ENCODE measurements at regions of chr3 and their contacts with region 1.

Region 1: DNA sequence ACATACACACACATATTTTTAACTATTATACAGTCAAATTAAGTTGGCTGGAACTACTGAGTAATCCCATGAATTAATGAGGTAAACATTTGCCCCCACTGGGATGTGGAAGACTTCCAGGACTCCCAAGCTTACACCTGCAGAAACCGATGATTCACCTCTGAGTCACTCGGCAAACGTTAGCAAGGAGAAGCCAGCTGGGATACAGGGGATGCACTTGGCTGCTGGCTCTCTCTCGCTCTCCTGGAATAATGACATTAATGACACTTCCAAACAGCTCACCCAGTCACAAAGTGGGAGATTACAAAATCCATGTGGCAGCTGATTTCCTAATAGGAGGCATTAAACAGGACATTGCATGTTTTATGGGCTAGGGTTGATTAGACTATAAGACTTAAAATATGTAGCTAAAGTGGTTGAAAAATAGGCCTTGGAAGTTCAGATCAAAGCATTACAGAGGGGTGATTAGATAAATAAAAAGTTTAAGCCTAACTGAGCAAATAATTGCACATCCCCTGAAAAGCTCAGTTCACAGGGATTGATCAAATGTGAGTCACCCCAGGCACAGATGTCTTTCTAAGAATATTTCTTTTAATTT is 500.9 kb downstream of the SOX2 start:
- DNase-seq: peak; percentile 89 to 93
- H3K4me3 ChIP-seq: no peak overlapping the region
- H3K4me3 Mint-ChIP-seq: no peak overlapping the region
- H3K27ac Mint-ChIP-seq: peak overlapping the region; percentile 75
- H3K4me1 ChIP-seq: peaks cover 43% of the 10 kb centered on the region
- H3K4me1 Mint-ChIP-seq: peaks cover 37% of the 10 kb centered on the region
- H3K27me3 ChIP-seq: no peaks in the 10 kb centered on the region
- H3K27me3 Mint-ChIP-seq: no peaks in the 10 kb centered on the region
- CTCF ChIP-seq: no peak

Region 2: DNA sequence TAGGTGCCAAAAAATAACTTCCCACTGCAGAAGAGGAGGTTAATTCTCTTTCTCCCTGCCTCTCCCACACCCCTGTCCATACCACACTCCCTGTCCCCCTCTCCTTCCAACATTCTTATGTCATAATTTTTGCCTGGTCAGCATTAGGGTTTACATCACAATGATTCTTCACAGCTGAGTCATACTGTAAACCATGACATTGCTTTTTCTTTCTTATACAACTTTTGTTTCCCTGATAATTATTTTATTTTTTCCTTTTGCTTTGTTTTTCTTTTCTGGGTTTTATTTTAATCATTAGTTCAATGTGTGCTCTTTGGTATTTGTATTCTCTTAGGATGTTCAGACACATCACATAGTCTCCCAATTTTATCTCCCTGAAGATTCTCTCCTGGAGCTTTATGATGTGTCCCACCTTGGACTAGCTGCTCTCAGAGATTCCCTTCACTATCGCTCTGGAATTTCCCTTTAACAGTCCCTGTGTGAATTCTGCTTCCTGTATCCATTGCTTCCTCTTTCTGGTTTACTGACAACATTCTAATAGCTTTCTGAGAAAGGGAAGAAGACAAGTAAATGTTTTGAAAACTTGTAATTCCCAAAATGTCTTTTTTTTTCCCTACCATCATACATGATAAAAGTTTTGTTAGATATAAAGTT is 430.1 kb before region 1 on chr3:
- CTCF ChIA-PET with region 1: no interaction called
- POLR2A ChIA-PET with region 1: no interaction called
- intact Hi-C with region 1: loop called (anchors 1 kb)
- DNase-seq: no peak
- H3K4me3 ChIP-seq: no peak overlapping the region
- H3K4me3 Mint-ChIP-seq: no peak overlapping the region
- H3K27ac Mint-ChIP-seq: no peak overlapping the region
- H3K4me1 ChIP-seq: peaks cover 9% of the 10 kb centered on the region; the same call in 1 of the 2 replicates
- H3K4me1 Mint-ChIP-seq: peaks cover 9% of the 10 kb centered on the region
- H3K27me3 ChIP-seq: no peaks in the 10 kb centered on the region
- H3K27me3 Mint-ChIP-seq: no peaks in the 10 kb centered on the region
- CTCF ChIP-seq: no peak

Region 3: GRCh38 chr3:181969925-181970324 is 242.7 kb before region 1 on chr3:
- CTCF ChIA-PET with region 1: no interaction called
- POLR2A ChIA-PET with region 1: no interaction called
- intact Hi-C with region 1: no loop called
- DNase-seq: no peak
- H3K4me3 ChIP-seq: no peak overlapping the region
- H3K4me3 Mint-ChIP-seq: no peak overlapping the region
- H3K27ac Mint-ChIP-seq: no peak overlapping the region
- H3K4me1 ChIP-seq: no peaks in the 10 kb centered on the region
- H3K4me1 Mint-ChIP-seq: no peaks in the 10 kb centered on the region
- H3K27me3 ChIP-seq: no peaks in the 10 kb centered on the region
- H3K27me3 Mint-ChIP-seq: no peaks in the 10 kb centered on the region
- CTCF ChIP-seq: no peak

Region 4: GRCh38 chr3:182105875-182106274 is 106.7 kb before region 1 on chr3:
- CTCF ChIA-PET with region 1: no interaction called
- POLR2A ChIA-PET with region 1: no interaction called
- intact Hi-C with region 1: no loop called
- DNase-seq: no peak
- H3K4me3 ChIP-seq: no peak overlapping the region
- H3K4me3 Mint-ChIP-seq: no peak overlapping the region
- H3K27ac Mint-ChIP-seq: no peak overlapping the region
- H3K4me1 ChIP-seq: no peaks in the 10 kb centered on the region
- H3K4me1 Mint-ChIP-seq: peaks cover 7% of the 10 kb centered on the region
- H3K27me3 ChIP-seq: no peaks in the 10 kb centered on the region
- H3K27me3 Mint-ChIP-seq: no peaks in the 10 kb centered on the region
- CTCF ChIP-seq: no peak

Region 5: DNA sequence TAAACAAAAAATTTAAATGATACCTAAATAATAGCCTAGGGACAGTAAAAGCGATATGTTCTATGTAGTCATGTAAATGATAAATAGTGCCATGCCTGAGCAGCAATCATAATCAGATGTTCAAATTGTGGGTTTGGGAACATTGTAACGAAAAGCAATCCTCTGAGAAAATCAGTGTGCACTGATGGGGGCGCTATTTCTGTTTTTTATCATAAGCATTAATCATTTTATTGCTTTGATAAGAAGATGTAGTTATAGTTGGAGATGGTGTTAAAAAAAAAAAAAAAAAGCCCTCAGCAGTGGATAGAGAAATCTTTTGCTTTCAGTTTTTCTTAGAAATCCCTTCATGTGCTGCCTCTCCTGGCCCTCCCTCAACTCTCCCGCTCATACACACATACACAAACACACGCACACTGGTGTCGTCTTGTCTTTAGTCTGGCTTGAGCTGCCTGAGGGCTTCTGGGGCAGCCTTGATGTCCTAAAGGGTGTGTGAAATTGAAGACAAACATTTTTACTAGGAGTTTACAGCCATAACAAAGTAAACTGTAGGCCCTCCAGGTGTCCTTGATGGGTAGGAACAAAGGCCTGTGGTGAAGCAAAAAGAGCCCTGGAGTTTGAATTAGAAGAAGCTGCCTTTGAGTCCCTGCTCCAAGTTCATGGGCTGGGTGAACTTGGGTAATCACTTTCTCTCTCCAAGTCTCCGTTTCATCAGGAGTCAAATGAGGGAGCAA is 72.8 kb before region 1 on chr3:
- CTCF ChIA-PET with region 1: interaction called, 4 read pairs
- POLR2A ChIA-PET with region 1: no interaction called
- intact Hi-C with region 1: loop called (anchors 2 kb)
- DNase-seq: peak; percentile 39 to 50
- H3K4me3 ChIP-seq: no peak overlapping the region
- H3K4me3 Mint-ChIP-seq: no peak overlapping the region
- H3K27ac Mint-ChIP-seq: no peak overlapping the region
- H3K4me1 ChIP-seq: peaks cover 8% of the 10 kb centered on the region; the same call in 1 of the 2 replicates
- H3K4me1 Mint-ChIP-seq: peaks cover 18% of the 10 kb centered on the region
- H3K27me3 ChIP-seq: no peaks in the 10 kb centered on the region
- H3K27me3 Mint-ChIP-seq: no peaks in the 10 kb centered on the region
- CTCF ChIP-seq: no peak

Region 6: DNA sequence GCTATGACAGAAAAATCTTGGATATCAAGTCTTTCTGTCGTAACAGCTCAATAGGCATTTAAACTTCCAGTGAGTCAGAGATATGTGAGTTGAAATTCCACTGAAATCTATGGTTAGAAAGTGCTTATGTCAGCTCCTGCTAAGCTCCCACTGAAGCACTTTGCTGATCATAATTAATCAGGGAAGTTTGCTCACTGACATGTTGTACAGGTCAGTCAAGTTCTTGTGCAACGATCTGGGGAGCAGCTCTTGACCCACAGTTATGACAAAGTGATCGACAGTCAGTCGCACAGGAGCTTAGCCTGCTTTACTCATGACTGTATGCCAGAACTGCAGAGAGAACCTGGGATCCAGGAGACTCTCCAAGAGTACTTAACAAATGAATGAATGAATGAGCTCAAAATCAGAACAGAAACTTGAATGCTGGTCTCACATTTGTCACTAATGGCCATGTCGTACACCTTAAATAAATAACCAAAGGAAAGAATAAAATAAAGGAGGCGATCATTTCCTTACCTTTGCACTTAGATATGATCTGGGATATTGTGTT is 47.3 kb before region 1 on chr3:
- CTCF ChIA-PET with region 1: interaction called, 3 read pairs
- POLR2A ChIA-PET with region 1: interaction called, 4 read pairs
- intact Hi-C with region 1: loop called (anchors 1 kb)
- DNase-seq: peak; percentile 73 to 83
- H3K4me3 ChIP-seq: no peak overlapping the region
- H3K4me3 Mint-ChIP-seq: peak overlapping the region; percentile 36
- H3K27ac Mint-ChIP-seq: peak overlapping the region; percentile 84
- H3K4me1 ChIP-seq: peaks cover 13% of the 10 kb centered on the region
- H3K4me1 Mint-ChIP-seq: peaks cover 14% of the 10 kb centered on the region
- H3K27me3 ChIP-seq: no peaks in the 10 kb centered on the region
- H3K27me3 Mint-ChIP-seq: no peaks in the 10 kb centered on the region
- CTCF ChIP-seq: no peak

Region 7: GRCh38 chr3:182258538-182259177 is 46.1 kb after region 1 on chr3:
- CTCF ChIA-PET with region 1: no interaction called
- POLR2A ChIA-PET with region 1: no interaction called
- intact Hi-C with region 1: loop called (anchors 1 kb)
- DNase-seq: peak in 1 of 2 experiments; percentile 58
- H3K4me3 ChIP-seq: no peak overlapping the region
- H3K4me3 Mint-ChIP-seq: no peak overlapping the region
- H3K27ac Mint-ChIP-seq: no peak overlapping the region
- H3K4me1 ChIP-seq: no peaks in the 10 kb centered on the region; the same call in 1 of the 2 replicates
- H3K4me1 Mint-ChIP-seq: peaks cover 6% of the 10 kb centered on the region
- H3K27me3 ChIP-seq: no peaks in the 10 kb centered on the region
- H3K27me3 Mint-ChIP-seq: no peaks in the 10 kb centered on the region
- CTCF ChIP-seq: peak; percentile 66 to 68